ENCODE measurements at regions of chr7 and their contacts with region 1.

Region 1: DNA sequence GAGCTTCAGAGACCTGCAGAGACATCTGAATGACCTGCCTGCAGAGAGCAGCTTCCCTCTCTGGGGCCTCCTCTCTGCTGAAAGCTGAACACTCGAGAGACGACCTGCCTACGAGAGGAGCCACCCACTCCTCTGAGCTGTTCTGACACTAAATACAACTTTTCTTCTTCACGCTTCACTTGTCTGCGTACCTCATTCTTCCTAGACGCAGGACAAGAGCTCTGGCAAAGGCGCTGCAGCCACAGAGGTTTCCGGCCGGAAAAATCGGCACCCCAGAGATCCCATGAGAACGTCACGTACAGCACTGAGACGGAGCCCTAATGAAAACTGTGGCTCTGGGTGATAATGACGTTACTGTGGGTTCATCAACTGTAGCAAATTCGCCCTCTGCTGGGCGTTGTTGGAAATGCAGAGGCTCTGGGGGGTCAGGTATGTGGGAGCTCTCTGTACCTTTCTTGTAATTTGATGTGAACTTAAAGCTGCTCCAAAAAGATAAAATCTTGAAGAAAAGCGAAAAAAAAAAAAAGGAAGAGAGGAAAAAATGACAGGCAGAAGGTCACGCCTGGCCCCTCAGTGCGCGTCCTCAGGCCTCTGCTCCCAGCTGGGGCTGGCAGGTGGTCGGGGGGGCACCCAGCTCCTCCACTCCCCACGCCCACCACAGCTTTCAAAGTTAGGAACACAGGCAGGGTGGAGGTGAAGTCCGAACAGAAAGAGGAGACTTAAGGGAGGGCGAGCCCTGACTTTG is 120.7 kb downstream of the DYNC2I1 start:
- DNase-seq: peak; percentile 85
- H3K4me3 Mint-ChIP-seq: peak overlapping the region; percentile 60
- H3K27ac Mint-ChIP-seq: peak overlapping the region; percentile 44
- H3K4me1 Mint-ChIP-seq: peaks cover 7% of the 10 kb centered on the region
- H3K27me3 Mint-ChIP-seq: no peaks in the 10 kb centered on the region
- CTCF ChIP-seq: peak; percentile 92

Region 2: GRCh38 chr7:158782761-158783401 is 194.1 kb before region 1 on chr7:
- CTCF ChIA-PET with region 1: interaction called, 3 read pairs
- POLR2A ChIA-PET with region 1: interaction called, 5 read pairs
- intact Hi-C with region 1: loop called (anchors 5 kb)
- DNase-seq: peak; percentile 51
- H3K4me3 Mint-ChIP-seq: no peak overlapping the region
- H3K27ac Mint-ChIP-seq: no peak overlapping the region
- H3K4me1 Mint-ChIP-seq: no peaks in the 10 kb centered on the region
- H3K27me3 Mint-ChIP-seq: no peaks in the 10 kb centered on the region
- CTCF ChIP-seq: peak; percentile 25

Region 3: DNA sequence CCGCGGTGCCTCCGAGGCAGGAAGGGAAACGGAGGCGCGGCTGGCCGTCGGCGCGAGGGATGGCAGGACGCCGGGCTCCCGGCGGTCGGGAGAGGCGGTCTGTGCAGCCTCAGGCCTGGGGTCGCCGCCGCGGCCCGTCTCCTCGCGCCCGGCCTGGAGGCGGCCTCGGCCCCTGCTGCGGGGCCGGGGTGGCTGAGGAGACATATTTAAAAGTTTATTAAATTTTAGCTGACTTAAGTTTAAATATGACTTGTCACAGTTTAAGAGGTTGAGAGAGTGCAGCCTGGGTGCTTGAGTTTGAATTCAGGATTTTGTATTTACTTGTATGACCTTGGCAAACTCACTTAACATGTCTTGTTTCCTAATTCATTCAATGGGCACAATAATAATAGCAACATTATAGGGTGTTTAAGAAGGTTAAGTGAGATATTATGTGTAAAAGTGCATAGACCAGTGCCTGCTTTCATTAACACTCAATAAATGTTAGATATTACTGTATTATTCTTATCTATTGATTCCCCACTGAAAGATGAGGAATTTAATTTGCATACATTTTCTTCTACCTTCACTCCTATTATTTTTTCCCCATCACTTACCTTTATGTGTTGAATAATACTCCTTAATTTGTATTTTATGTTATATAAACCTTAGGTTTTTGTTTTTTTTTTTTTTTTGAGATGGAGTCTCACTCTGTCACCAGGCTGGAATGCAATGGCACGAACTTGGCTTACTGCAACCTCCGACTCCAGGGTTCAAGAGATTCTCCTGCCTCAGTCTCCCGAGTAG is 119.9 kb before region 1 on chr7:
- CTCF ChIA-PET with region 1: interaction called, 10 read pairs
- POLR2A ChIA-PET with region 1: no interaction called
- intact Hi-C with region 1: no loop called
- DNase-seq: no peak
- H3K4me3 Mint-ChIP-seq: peak overlapping the region; percentile 99
- H3K27ac Mint-ChIP-seq: peak overlapping the region; percentile 97
- H3K4me1 Mint-ChIP-seq: peaks cover 5% of the 10 kb centered on the region
- H3K27me3 Mint-ChIP-seq: no peaks in the 10 kb centered on the region
- CTCF ChIP-seq: no peak

Region 4: DNA sequence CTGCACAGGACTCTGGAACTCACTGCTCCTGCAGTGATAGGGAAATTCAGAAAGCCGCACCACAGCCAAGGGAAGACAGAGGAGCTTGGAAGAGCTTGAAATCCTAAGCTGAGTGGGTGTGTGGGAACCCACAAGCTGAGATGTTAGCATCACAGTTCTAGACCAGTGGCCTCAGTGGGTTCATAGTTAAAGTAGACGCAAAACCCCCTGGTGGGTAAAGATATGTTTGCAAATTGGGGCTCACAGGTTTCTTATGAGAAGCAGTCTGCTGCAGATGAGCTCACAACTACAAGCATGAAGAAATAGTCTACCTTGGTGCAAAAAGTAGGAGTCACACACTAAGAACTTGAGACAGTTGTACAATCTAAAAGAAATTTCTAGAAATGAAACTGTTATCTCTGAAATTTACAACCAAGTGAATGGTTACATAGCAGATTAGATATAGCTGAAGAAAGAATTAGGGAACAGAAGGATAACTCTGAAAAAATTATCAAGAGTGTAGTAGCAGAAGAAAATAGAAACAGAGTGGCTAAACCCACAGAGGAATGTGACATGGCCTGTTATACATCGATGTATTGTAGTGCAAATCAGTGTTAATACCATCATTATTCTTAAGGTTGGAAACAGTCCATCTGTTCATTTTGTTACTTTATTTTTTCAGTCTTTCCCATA is 43.4 kb before region 1 on chr7:
- CTCF ChIA-PET with region 1: interaction called, 10 read pairs
- POLR2A ChIA-PET with region 1: no interaction called
- intact Hi-C with region 1: no loop called
- DNase-seq: peak; percentile 16
- H3K4me3 Mint-ChIP-seq: no peak overlapping the region
- H3K27ac Mint-ChIP-seq: no peak overlapping the region
- H3K4me1 Mint-ChIP-seq: no peaks in the 10 kb centered on the region
- H3K27me3 Mint-ChIP-seq: no peaks in the 10 kb centered on the region
- CTCF ChIP-seq: no peak

Region 5: DNA sequence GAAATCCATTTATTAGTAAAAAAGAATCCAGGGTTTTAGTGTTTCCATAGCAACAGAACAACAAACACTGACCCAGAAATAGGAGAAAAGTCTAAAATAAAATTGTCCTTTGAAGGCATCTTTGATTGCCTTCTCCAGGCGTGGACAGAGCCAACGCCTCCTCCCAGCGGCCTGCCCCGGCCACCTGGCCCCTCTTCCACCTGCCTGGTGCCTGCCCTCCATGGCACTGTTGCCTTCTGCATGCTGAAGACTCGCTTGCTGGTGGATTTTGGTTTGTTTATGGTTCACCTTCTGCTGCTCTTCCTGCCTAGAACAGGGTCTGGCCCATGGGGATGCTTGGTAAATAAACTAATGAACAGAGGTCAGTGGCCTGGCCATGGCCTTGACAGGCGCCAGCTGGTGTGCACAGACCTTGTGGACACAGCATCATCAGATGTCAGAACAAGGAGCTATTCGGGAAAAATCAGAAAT is 13.2 kb before region 1 on chr7:
- CTCF ChIA-PET with region 1: interaction called, 22 read pairs
- POLR2A ChIA-PET with region 1: interaction called, 4 read pairs
- intact Hi-C with region 1: no loop called
- DNase-seq: no peak
- H3K4me3 Mint-ChIP-seq: no peak overlapping the region
- H3K27ac Mint-ChIP-seq: no peak overlapping the region
- H3K4me1 Mint-ChIP-seq: no peaks in the 10 kb centered on the region
- H3K27me3 Mint-ChIP-seq: no peaks in the 10 kb centered on the region
- CTCF ChIP-seq: no peak

Region 6: GRCh38 chr7:159027691-159028455 is 50.9 kb after region 1 on chr7:
- CTCF ChIA-PET with region 1: interaction called, 14 read pairs
- POLR2A ChIA-PET with region 1: no interaction called
- intact Hi-C with region 1: no loop called
- DNase-seq: peak; percentile 69
- H3K4me3 Mint-ChIP-seq: no peak overlapping the region
- H3K27ac Mint-ChIP-seq: peak overlapping the region; percentile 16
- H3K4me1 Mint-ChIP-seq: peaks cover 11% of the 10 kb centered on the region
- H3K27me3 Mint-ChIP-seq: no peaks in the 10 kb centered on the region
- CTCF ChIP-seq: no peak

Measured in MCF 10A (cell line).